ENCODE measurements at regions of chr2 and their contacts with region 1.

Region 1: DNA sequence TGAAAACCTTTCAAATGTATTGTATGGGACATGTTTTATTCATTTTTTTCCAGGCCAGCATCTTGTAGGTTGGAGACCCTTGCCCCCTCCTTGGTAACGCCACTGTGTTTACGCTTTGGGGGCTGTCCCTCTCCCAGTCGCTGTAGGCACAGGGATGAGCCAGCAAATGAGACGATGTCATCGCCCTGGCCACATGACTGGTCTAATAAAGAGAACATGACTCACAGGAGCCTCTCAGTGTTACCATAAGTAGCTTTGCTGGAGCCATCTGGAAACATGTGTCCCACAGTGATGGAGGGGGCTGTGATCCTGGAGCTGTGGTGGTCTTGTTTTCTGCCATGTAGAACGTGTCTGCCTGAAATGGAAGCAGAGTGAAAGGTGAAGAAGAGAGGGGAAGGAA is 78.9 kb downstream of the CD8B2 start:
- DNase-seq: no peak
- H3K4me3 ChIP-seq: no peak overlapping the region
- H3K27ac ChIP-seq: no peak overlapping the region
- H3K4me1 ChIP-seq: no peaks in the 10 kb centered on the region; a peak in 1 of 7 replicates
- H3K27me3 ChIP-seq: no peaks in the 10 kb centered on the region
- CTCF ChIP-seq: no peak
- EP300 ChIP-seq: no peak
- POLR2A ChIP-seq: no peak
- RAD21 ChIP-seq: no peak

Region 2: DNA sequence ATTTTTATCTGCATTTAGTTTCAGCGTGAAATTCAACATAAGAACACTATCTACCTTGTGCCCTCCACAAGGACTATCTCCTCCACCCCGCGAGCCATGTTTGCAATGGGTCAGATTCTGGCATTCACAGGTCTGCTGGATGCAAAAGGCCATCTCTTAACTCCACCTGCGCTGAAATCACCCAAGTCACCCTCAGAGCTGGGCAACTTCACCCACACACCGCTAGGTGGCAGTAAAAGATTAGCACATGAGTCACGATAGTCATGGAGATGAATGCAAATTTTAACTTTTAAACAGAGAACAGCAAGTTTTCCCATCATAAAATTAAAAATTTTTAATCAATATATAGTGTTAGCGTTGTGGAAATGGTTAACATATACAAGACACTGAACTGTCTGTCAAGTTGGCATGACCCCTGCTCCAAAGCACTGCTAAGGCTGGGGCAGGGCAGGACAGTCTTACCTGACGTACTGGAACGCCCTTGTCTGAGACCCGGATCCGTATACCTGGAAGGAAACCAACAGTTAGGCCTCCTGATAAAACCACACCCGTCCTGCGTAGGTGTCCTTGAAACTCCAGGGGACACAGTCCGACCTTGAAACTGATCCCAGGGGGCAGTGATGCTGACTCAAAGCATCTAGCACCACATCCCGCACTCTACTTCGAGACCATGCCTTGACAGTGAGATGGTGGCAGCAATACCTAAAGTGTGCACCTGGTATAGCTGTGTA is 461.6 kb before region 1 on chr2:
- CTCF ChIA-PET with region 1: interaction called, 10 read pairs
- POLR2A ChIA-PET with region 1: no interaction called
- DNase-seq: peak; percentile 36 to 67
- H3K4me3 ChIP-seq: no peak overlapping the region
- H3K27ac ChIP-seq: no peak overlapping the region
- H3K4me1 ChIP-seq: no peaks in the 10 kb centered on the region
- H3K27me3 ChIP-seq: no peaks in the 10 kb centered on the region
- CTCF ChIP-seq: peak; percentile 81 to 89 (median 85)
- EP300 ChIP-seq: no peak
- POLR2A ChIP-seq: no peak
- RAD21 ChIP-seq: peak; percentile 96 to 97

Region 3: GRCh38 chr2:106552921-106553320 is 13.1 kb before region 1 on chr2:
- CTCF ChIA-PET with region 1: interaction called, 20 read pairs
- POLR2A ChIA-PET with region 1: no interaction called
- DNase-seq: no peak
- H3K4me3 ChIP-seq: no peak overlapping the region
- H3K27ac ChIP-seq: no peak overlapping the region
- H3K4me1 ChIP-seq: no peaks in the 10 kb centered on the region
- H3K27me3 ChIP-seq: no peaks in the 10 kb centered on the region
- CTCF ChIP-seq: no peak
- EP300 ChIP-seq: no peak
- POLR2A ChIP-seq: no peak
- RAD21 ChIP-seq: no peak

Region 4: DNA sequence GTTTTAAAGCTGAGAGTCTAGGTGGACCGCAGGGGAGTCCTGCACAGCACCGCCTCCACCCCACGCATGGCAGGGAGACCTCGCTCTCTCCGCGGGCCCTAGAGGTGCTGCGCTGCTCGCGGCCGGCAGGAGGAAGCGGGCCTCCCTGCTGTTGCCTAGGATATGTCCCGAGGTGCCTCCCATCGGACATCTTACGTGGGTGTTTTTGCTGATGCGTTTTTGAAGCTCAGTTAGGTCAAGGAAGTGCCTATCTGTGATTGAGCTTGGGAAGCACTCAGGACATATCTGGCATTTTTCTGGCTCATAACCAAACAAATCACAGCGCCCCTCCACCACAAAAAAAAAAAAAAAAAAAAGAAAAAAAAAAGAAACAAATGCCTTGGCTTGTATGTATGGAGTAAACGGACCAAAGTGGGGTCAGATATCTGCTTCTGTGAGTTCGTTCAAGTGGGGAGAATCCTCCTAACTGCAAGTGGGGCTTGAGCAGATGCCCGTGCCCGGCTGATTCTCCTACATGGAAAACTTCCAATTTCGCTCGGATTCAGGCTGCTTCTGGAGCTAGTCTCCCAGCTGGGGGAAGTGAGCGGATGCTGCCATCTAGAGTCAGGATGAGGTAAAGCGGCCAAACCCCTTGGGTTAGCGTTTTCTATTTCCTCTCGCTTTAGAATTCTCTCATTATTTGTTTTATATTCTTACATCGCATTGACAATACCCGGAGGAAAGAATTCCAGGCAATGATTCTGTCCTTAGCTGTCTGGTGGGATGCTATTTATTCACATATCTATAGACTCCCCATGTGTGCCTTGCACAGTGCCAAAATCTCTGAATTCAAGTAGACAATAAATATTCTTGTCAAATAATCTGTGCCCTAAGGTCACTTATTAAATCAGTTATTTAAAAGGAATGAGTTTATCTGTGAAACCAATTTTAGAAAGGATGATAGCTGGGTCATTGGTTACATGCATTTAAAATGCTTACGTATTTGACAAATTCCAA is 16.4 kb after region 1 on chr2:
- CTCF ChIA-PET with region 1: interaction called, 330 read pairs
- POLR2A ChIA-PET with region 1: no interaction called
- DNase-seq: peak; percentile 51 to 83
- H3K4me3 ChIP-seq: peak overlapping the region; percentile 20 to 57 (median 39); a peak in 6 of 8 replicates
- H3K27ac ChIP-seq: no peak overlapping the region
- H3K4me1 ChIP-seq: no peaks in the 10 kb centered on the region
- H3K27me3 ChIP-seq: peaks cover 2 to 31% (median 12%) of the 10 kb centered on the region in 4 experiments
- CTCF ChIP-seq: peak; percentile 80 to 94 (median 88)
- EP300 ChIP-seq: no peak
- POLR2A ChIP-seq: no peak
- RAD21 ChIP-seq: peak; percentile 91 to 96

Region 5: GRCh38 chr2:106970471-106971261 is 404.6 kb after region 1 on chr2:
- CTCF ChIA-PET with region 1: no interaction called
- POLR2A ChIA-PET with region 1: no interaction called
- DNase-seq: no peak
- H3K4me3 ChIP-seq: no peak overlapping the region
- H3K27ac ChIP-seq: no peak overlapping the region
- H3K4me1 ChIP-seq: no peaks in the 10 kb centered on the region; a peak in 1 of 7 replicates
- H3K27me3 ChIP-seq: no peaks in the 10 kb centered on the region
- CTCF ChIP-seq: no peak
- EP300 ChIP-seq: no peak
- POLR2A ChIP-seq: no peak
- RAD21 ChIP-seq: no peak

Measured in H1 (cell line).